K562 (cell line): ENCODE measurements at regions of chr1 and their contacts with region 1.

Region 1: GRCh38 chr1:30219675-30220074 is 503.7 kb downstream of the MATN1 start:
- DNase-seq: no peak
- ATAC-seq: no peak
- H3K4me3 ChIP-seq: no peak overlapping the region
- H3K27ac ChIP-seq: no peak overlapping the region
- H3K4me1 ChIP-seq: no peaks in the 10 kb centered on the region
- H3K27me3 ChIP-seq: peaks cover 4 to 26% of the 10 kb centered on the region in 2 experiments; a peak in 3 of 5 replicates
- CTCF ChIP-seq: no peak
- EP300 ChIP-seq: no peak
- POLR2A ChIP-seq: no peak
- RAD21 ChIP-seq: no peak

Region 2: DNA sequence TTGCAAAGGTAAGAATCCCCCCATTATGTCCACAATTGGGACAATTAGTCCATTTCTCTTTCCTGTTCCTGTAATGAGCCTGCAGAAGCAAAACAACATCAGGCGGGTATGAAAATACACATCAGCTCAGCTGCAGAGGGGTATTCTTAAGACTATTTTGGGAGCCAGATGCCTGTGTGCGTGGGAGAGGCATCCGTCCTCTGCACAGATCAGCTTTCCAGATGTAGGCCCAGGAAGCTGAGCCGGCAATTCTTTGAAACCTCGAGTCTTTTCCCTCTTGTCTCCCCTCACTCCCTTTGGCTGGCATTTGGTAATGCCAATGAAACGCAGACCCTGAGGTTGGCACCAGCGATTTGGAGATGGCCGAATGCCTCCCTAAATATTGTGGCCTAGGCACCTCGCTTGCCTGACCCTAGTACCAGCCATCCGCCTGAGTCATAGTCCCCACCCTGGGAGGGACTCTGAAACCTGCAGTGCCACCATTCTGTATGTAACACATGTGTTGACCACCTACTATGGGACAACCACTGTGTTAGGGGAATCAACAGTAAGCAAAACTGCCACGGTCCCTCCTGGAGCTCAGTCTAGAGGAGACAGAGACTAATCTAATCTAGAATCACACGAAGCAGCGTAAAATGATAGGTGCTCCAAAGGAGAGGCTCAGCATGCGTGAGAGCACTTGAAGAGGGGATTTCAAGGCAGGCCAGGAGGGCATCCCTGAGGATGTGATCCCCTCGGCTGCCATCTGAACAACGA is 99.3 kb before region 1 on chr1:
- CTCF ChIA-PET with region 1: no interaction called
- POLR2A ChIA-PET with region 1: no interaction called
- in situ Hi-C with region 1: loop called (anchors 5 kb)
- intact Hi-C with region 1: no loop called
- DNase-seq: peak in 1 of 4 experiments; percentile 26
- ATAC-seq: no peak
- H3K4me3 ChIP-seq: no peak overlapping the region
- H3K27ac ChIP-seq: no peak overlapping the region
- H3K4me1 ChIP-seq: peaks cover 12 to 19% of the 10 kb centered on the region in 2 experiments; a peak in 4 of 5 replicates
- H3K27me3 ChIP-seq: peaks cover 2 to 44% of the 10 kb centered on the region in 2 experiments; a peak in 3 of 5 replicates
- CTCF ChIP-seq: no peak
- EP300 ChIP-seq: no peak
- POLR2A ChIP-seq: no peak
- RAD21 ChIP-seq: no peak